Endothelial cell of umbilical vein (primary cell): ENCODE measurements at regions of chr11 and their contacts with region 1.

Region 1: DNA sequence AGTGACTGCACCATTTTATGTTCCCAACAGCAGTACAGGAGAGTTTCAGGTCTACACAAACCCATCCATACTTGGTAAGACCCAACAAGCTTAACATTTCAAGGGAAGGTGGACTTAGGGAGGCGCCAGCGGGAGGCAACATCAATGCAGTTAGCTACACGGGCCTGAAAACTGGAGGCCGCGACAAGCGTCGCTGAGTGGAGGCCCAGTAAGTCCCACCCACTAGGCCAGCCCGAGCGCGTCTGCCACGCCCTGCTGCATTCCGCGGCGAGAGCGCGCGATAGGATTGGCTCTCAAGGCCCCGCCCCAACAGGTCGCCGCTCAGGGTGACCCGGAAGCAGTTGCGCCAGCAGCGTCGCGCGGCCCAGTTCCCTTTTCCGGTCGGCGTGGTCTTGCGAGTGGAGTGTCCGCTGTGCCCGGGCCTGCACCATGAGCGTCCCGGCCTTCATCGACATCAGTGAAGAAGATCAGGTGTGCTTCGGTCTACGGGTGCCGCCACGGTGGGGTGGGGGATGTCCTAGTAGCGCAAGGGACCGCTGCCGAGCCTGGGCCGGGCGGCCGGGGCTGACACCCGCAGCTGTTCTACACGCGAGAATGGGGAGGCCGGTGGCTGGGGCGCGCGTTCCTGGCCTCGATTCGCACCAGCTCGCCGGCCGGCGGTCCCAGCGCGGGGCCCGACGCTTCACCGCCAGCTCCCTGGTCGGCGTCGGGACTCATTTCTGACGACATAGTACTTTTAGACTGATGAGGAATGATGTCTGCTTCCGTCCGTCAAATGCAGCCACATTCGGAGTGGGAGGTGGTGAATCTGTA is at the start of gene EIF3M:
- DNase-seq: peak; percentile 96
- H3K4me3 ChIP-seq: peak within 1 kb of the TSS; percentile 85 to 98 (median 91)
- H3K27ac ChIP-seq: peak within 1 kb of the TSS; percentile 59
- H3K4me1 ChIP-seq: peaks cover 20% of the 10 kb centered on the region
- H3K27me3 ChIP-seq: no peaks in the 10 kb centered on the region
- CTCF ChIP-seq: no peak
- POLR2A ChIP-seq: peak; percentile 80
- total RNA-seq, gene EIF3M: 240 and 243 TPM in 2 replicates

Region 2: DNA sequence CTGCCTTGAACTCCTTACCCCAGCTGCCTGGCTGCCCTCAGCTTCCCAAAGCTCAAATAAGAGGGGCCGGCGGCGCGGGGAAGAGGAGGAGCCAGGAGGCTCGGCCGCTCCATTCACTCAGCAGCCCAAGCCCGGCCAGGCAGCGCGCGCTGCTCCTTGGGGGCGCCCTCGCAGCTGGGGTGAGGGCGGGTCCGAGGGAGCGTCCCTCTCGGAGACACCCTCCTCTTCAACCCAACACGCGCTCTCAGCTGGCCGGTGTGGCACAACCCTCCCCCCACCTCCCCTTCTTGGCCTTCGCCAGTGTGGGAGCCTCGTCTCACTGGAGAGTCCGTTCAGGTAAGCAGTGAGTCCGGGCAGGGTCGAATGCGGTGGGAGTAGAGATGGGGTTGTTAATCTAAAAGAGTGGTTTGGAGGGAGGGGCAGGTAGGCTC is 148.1 kb before region 1 on chr11 and contains the start of gene WT1:
- CTCF ChIA-PET with region 1: no interaction called
- POLR2A ChIA-PET with region 1: no interaction called
- dilution Hi-C with region 1: no loop called
- intact Hi-C with region 1: no loop called
- DNase-seq: no peak
- H3K4me3 ChIP-seq: no peak within 1 kb of the TSS
- H3K27ac ChIP-seq: no peak within 1 kb of the TSS
- H3K4me1 ChIP-seq: no peaks in the 10 kb centered on the region
- H3K27me3 ChIP-seq: peaks cover 87 to 96% of the 10 kb centered on the region in 2 experiments
- CTCF ChIP-seq: no peak
- POLR2A ChIP-seq: no peak
- total RNA-seq, gene WT1: not detected in 2 replicates

Region 3: GRCh38 chr11:32602657-32603415 is 19.2 kb after region 1 on chr11:
- CTCF ChIA-PET with region 1: no interaction called
- POLR2A ChIA-PET with region 1: no interaction called
- dilution Hi-C with region 1: no loop called
- intact Hi-C with region 1: loop called (anchors 1 kb)
- DNase-seq: peak; percentile 66
- H3K4me3 ChIP-seq: no peak overlapping the region
- H3K27ac ChIP-seq: peak overlapping the region; percentile 36
- H3K4me1 ChIP-seq: peaks cover 6% of the 10 kb centered on the region
- H3K27me3 ChIP-seq: no peaks in the 10 kb centered on the region
- CTCF ChIP-seq: no peak
- POLR2A ChIP-seq: no peak

Region 4: DNA sequence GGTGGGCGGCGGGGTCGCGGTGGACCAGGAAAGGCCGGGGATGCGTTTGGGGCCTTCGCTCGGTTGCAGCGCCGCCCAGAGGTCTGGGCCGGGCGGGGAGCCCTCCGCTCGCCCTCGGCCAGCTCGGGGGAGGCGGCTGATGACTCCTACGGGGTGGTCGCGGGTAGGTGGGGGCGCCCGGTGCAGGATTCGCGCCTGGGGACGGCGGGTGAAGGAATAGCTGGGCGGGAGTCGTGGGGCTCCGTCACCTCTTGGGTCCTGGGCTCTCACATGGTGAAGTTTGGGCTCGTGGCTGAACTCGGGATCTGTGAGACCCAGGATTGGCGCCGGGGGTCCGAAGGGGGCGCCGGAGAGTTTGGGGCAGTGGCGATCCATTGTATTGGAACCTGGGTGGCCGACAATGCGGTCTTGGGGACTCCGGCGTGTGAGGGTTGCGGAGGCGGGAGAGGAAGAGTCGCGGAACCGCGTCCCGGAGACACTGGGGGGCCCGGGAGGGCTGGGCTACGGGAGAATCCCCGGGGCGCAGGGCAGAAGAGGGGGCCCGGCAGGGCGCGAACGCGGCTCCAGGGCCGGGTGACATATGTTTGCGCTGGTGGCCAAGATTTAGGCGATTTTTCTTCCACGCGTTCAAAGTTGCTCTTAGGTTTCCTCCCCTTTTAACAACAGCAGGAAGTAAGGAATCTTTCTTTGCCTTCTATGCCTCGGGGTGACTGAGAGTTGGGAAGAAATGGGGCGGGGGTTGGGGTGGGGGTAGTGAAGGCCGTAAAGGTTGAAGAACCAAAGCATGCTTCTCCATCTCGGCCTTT is 309.9 kb after region 1 on chr11:
- CTCF ChIA-PET with region 1: no interaction called
- POLR2A ChIA-PET with region 1: no interaction called
- dilution Hi-C with region 1: no loop called
- intact Hi-C with region 1: loop called (anchors 5 kb)
- DNase-seq: peak; percentile 56
- H3K4me3 ChIP-seq: peak overlapping the region; percentile 82 to 98 (median 93)
- H3K27ac ChIP-seq: peak overlapping the region; percentile 89
- H3K4me1 ChIP-seq: peaks cover 13% of the 10 kb centered on the region
- H3K27me3 ChIP-seq: no peaks in the 10 kb centered on the region
- CTCF ChIP-seq: peak; percentile 45 to 55
- POLR2A ChIP-seq: no peak